PC-9 (cell line): ENCODE measurements at regions of chr19 and their contacts with region 1.

Region 1: GRCh38 chr19:53879140-53880081 is 2.6 kb upstream of the PRKCG start:
- DNase-seq: peak; percentile 70 to 96
- H3K4me3 ChIP-seq: peak overlapping the region; percentile 59
- H3K27ac ChIP-seq: no peak overlapping the region
- H3K4me1 ChIP-seq: peaks cover 22% of the 10 kb centered on the region
- H3K27me3 ChIP-seq: no peaks in the 10 kb centered on the region
- CTCF ChIP-seq: no peak

Region 2: GRCh38 chr19:53906211-53907192 is 27.1 kb after region 1 on chr19:
- CTCF ChIA-PET with region 1: no interaction called
- POLR2A ChIA-PET with region 1: interaction called, 18 read pairs
- intact Hi-C with region 1: no loop called
- DNase-seq: peak in 1 of 2 experiments; percentile 63
- H3K4me3 ChIP-seq: no peak overlapping the region
- H3K27ac ChIP-seq: no peak overlapping the region
- H3K4me1 ChIP-seq: peaks cover 23% of the 10 kb centered on the region
- H3K27me3 ChIP-seq: peaks cover 18% of the 10 kb centered on the region
- CTCF ChIP-seq: peak; percentile 99

Region 3: DNA sequence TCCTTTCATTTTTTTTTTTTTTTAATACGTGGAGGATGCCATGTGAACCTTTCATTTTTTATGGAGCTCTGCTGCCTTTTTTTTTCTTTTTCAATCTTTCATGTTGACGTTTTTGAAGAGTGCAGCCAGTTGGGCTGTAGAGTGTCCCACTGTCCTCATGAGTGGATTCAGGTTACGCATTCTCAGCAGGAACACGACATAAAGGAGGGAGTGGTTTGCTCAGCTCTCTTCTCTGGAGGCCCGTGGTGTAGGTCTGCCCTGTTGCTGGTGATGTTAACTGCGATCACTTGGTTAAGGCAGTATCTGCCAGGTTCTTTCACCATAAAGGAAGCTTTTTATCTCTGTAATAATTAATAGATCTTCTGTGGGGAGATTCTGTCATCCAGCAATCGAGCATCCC is 56.6 kb after region 1 on chr19:
- CTCF ChIA-PET with region 1: no interaction called
- POLR2A ChIA-PET with region 1: no interaction called
- intact Hi-C with region 1: no loop called
- DNase-seq: no peak
- H3K4me3 ChIP-seq: no peak overlapping the region
- H3K27ac ChIP-seq: no peak overlapping the region
- H3K4me1 ChIP-seq: no peaks in the 10 kb centered on the region
- H3K27me3 ChIP-seq: no peaks in the 10 kb centered on the region
- CTCF ChIP-seq: no peak

Region 4: DNA sequence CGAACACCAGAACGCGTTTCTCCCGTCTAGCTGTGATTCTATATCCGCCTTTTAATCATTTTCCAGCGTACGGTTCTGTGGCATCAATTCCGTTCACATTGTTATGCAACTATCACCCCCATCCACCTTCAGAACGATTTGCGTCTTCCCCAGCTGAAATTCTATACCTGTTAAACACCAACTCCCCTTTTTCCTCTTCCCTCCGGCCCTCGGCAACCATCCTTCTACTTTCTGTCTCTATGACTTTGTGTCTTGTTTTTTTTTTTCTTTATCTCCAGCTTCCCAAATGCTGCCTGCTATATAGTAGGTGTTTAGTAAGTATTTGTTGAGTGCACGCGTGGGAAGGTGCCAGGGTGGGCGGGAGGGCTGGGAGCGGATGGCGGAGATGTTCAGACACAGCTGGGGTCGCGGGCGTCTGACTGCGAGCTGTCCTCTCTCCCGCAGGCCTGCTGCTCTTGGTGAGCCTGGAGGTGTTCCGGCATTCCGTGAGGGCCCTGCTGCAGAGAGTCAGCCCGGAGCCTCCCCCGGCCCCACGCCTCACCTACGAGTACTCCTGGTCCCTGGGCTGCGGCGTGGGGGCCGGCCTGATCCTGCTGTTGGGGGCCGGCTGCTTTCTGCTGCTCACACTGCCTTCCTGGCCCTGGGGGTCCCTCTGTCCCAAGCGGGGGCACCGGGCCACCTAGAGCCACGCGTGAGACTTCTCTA is 132.2 kb after region 1 on chr19:
- CTCF ChIA-PET with region 1: no interaction called
- POLR2A ChIA-PET with region 1: no interaction called
- intact Hi-C with region 1: no loop called
- DNase-seq: no peak
- H3K4me3 ChIP-seq: no peak overlapping the region
- H3K27ac ChIP-seq: no peak overlapping the region
- H3K4me1 ChIP-seq: peaks cover 37% of the 10 kb centered on the region
- H3K27me3 ChIP-seq: no peaks in the 10 kb centered on the region
- CTCF ChIP-seq: no peak